ENCODE measurements at regions of chr15 and their contacts with region 1.

Region 1: DNA sequence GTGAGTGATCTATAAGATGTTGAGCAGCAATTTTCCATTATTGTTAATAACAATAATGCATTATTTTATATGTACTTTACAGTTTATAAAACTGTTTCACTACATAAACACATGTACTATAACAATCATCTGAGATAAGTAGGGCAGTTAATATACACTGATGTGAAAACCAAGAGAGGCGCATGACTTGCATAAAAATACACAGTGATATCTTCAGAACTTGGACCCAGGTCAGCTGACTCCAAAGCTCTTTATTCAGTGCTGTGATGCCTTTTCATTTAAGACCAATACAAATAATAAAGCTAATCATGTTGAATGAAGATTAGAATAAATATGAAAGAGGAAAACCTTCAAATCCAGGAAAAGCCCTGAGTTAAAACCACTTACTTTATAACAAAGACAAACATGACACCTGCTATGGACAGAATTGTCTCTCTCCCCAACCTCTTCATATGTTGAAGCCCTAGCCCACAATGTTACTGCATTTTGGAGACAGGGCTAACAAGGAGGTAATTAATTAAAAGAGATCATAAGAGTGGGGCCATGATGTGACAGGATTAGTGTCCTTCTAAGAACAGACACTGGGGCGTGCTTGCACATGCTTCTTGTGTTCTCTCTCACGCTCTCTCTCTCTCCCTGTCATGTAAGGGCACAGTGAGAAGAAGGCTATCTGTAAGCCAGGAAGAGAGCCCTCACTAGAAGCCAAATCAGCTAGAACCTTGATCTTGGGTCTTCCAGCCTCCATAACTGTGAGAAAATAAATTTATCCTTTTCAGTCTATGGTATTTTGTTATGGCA is 55.8 kb upstream of the TSPAN3 start:
- DNase-seq: no peak
- CTCF ChIP-seq: no peak

Region 2: GRCh38 chr15:76905013-76905839 is 221.5 kb before region 1 on chr15 and contains the start of gene SCAPER:
- in situ Hi-C with region 1: no loop called
- DNase-seq: peak; percentile 94
- CTCF ChIP-seq: no peak

Region 3: DNA sequence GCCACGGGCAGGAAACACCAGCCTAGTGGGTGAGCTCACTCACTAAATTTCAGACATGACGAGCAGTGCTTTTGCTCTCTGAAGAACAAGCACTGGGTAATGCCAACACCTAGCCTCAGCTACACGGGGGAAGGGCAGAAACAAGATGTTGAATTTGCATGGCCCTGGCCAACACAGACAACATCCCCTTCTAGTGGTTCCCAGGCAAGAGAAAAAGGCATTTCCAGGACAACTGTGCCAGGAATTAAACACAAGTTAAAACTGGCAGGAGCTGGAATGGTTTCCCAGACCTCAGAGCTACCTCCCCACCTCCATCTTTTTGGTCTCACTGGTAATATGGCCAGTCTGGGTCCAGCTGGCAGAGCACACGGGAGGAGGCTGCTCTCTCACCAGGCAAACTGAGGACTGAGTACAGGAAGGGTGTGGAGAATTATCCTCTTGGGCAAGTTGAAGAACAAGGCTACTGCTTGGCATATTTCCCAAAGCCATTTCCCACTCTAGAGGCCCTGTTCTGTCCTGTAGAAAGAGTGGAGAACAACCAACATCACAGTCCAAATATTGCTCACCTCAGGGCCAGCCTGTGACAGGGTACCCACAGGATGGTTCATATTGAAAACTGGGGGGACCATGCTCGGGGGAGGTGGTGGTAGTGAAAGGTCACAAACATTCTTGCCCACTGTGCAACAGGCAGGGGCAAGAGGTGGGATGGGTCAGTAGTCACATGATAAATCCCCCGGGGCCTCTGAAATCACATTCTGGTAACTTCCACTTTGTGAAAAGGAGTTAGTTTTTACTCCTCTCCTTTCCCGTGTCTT is 82.3 kb before region 1 on chr15:
- in situ Hi-C with region 1: no loop called
- DNase-seq: no peak
- CTCF ChIP-seq: no peak

Region 4: GRCh38 chr15:77179541-77179998 is 52.8 kb after region 1 on chr15:
- in situ Hi-C with region 1: loop called (anchors 10 kb)
- DNase-seq: peak; percentile 31
- CTCF ChIP-seq: peak; percentile 27

Measured in GM13977 (cell line).